PC-3 (cell line): ENCODE measurements at regions of chr2 and their contacts with region 1.

Region 1: GRCh38 chr2:102872388-102872787 is 110.6 kb downstream of the TMEM182 start:
- DNase-seq: peak; percentile 13
- ATAC-seq: no peak
- H3K4me3 ChIP-seq: no peak overlapping the region
- H3K27ac ChIP-seq: no peak overlapping the region
- H3K4me1 ChIP-seq: no peaks in the 10 kb centered on the region
- H3K27me3 ChIP-seq: peaks cover 9% of the 10 kb centered on the region; the same call in 1 of the 2 replicates
- CTCF ChIP-seq: peak; percentile 53; the same call in 1 of the 2 replicates

Region 2: DNA sequence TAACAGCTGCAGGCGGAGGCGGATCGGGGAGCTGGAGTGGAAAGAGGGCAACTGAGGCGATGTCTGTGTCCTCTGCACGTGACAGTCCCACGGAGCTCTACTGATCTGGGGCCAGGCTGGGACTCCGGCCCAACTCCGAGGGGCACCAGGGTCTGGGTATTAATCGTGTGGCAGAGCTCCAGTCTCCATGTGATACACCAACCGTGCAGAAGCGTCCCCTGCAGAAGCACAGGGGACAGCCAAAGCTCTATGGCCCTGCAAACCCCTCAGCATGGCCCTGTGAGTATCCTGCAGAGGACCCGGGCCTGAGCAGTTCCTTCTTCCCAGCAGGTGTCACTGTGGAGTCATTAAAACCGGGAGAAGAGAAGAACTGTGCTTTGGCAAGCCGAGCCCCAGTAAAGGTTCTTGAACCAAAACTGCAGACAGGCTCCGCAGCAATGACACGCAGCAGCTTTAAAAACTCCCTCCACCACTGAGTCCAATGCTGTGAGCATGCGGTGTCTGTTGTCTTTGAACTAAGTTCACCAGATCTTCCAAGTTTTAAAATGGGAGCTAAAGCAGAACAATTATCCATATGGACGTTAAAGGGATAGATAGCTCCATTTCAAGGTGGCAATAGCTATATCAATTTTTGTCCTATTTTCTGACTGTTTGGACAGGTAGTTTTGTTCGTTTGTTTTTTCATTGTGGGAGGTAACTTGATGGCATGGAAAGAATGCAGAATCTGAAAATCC is 31.1 kb before region 1 on chr2:
- CTCF ChIA-PET with region 1: no interaction called
- POLR2A ChIA-PET with region 1: no interaction called
- intact Hi-C with region 1: loop called (anchors 1 kb)
- DNase-seq: peak; percentile 74
- ATAC-seq: peak; percentile 96
- H3K4me3 ChIP-seq: no peak overlapping the region
- H3K27ac ChIP-seq: no peak overlapping the region
- H3K4me1 ChIP-seq: no peaks in the 10 kb centered on the region
- H3K27me3 ChIP-seq: no peaks in the 10 kb centered on the region
- CTCF ChIP-seq: peak; percentile 81